ENCODE measurements at regions of chr15 and their contacts with region 1.

Region 1: DNA sequence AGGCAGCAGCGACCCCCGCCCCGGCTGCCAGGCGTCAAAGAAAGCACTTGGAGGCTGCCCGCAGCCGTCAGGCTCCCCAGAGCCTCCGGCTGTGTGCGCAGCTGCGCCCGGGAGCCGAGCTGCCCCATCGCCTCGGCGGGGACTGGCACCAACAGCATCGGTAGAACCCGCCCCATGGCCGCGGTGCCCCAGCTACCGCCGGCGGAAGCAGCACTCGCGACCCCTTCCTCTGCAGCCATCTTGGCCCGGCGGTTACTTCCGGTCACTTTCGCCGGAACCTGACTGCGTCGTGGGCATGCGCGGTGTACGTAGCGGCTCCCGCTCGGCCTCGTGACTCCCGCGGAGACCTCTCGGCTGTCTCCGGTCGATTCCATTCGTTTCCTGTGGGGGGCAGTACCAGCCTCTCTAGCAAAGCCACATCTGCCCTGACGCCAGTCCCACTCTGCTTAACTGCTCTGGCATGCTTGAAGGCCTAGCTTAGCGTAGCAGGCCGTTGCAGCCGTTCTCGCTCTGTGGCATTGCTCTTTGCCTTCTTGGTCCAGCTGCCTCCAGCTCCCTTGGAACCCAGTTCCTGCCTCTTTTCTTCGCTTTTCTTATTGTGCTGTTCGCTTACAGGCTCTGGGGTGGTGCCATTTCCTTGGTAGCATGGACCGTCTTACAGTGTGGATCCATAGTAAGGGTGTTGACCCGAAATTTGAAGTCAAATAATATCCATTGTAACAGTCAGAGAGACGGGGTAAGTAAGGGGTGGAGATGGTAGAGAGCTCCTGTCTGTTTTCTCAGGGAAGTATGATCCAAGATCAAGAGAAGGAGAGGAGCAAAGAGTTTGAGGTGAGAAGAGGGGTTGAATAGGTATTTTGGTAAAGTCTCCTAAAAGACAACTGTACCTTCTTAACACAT is at the start of gene SPG11:
- DNase-seq: peak; percentile 96 to 98 (median 98)
- ATAC-seq: peak; percentile 94 to 98 (median 96)
- H3K4me3 ChIP-seq: peak within 1 kb of the TSS; percentile 77 to 96 (median 90)
- H3K27ac ChIP-seq: peak within 1 kb of the TSS; percentile 92 to 99 (median 95)
- H3K4me1 ChIP-seq: peaks cover 0 to 21% (median 5%) of the 10 kb centered on the region in 4 donors
- H3K27me3 ChIP-seq: no peaks in the 10 kb centered on the region
- CTCF ChIP-seq: peak; percentile 92 to 98 (median 95)
- POLR2A ChIP-seq: peak; percentile 96
- total RNA-seq, gene SPG11: 35.4 to 55.6 (median 40.8) TPM

Region 2: GRCh38 chr15:44738340-44738984 is 74.8 kb after region 1 on chr15:
- intact Hi-C with region 1: loop called (anchors 10 kb)
- DNase-seq: no peak
- ATAC-seq: peak; percentile 59 to 80 (median 76)
- H3K4me3 ChIP-seq: no peak overlapping the region
- H3K27ac ChIP-seq: no peak overlapping the region
- H3K4me1 ChIP-seq: no peaks in the 10 kb centered on the region
- H3K27me3 ChIP-seq: no peaks in the 10 kb centered on the region
- CTCF ChIP-seq: peak; percentile 57 to 80 (median 68)
- POLR2A ChIP-seq: no peak

Measured in right lobe of liver (tissue), 6 donors.